ENCODE measurements at regions of chr4 and their contacts with region 1.

Region 1: DNA sequence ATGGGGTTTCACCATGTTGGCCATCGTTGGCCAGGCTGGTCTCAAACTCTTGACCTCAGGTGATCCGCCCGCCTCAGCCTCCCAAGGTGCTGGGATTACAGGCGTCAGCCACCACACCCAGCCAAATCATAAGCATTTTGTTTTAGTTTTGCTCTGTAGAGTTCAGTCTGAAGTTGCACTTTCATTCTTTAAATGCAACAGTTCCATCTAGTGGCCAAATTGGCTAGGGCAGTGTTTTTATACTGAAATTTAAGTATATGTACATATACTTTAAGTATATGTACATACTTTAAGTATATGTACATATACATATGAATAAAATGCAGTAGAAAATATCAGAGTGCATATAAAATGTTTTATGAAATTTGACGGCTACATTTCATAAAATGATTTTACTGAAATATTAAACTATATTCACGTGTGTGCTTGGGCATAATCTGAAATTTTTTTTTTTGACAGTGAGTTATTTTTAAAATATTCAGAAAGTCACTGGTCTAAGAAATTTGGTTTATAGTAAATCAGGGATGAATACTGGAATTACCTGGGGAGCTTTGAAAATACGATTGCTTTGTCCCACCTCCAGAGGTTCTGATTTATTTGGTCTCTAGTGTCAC is 145.5 kb downstream of the NWD2 start:
- DNase-seq: peak; percentile 32
- ATAC-seq: no peak; the same call in 1 of the 2 replicates
- H3K4me3 ChIP-seq: peak overlapping the region in 1 of 2 experiments; percentile 18; a peak in 1 of 4 replicates
- H3K27ac ChIP-seq: no peak overlapping the region
- H3K4me1 ChIP-seq: no peaks in the 10 kb centered on the region
- H3K27me3 ChIP-seq: no peaks in the 10 kb centered on the region
- CTCF ChIP-seq: peak; percentile 70

Region 2: DNA sequence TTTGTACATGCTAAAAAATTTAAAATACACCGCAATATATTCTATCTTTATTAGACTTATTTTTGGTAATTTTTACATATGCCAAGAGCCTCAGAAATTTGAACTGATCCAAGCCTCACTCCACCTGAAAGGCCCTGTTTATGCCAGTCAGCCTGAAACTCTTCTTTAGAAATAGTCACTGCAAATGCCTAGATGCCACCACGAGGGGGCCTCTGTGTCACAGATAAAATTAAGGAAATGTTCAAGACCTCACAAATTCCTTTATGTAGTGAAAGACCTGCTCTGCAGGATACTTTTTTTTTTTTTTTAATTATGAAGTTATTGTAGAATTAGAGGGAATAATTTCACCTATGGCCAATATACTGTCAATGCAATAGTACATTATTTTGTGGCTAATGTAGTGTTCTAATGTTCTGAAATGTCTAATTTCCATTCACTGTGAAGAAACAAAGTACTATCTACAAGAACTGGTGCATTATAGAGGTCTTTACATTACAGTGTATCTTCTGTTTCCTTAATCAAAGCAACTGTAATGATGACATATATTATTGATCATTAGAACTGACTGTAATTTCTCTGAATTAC is 1038.9 kb before region 1 on chr4:
- CTCF ChIA-PET with region 1: no interaction called
- POLR2A ChIA-PET with region 1: no interaction called
- in situ Hi-C with region 1: no loop called
- intact Hi-C with region 1: loop called (anchors 5 kb)
- DNase-seq: peak; percentile 13
- ATAC-seq: no peak
- H3K4me3 ChIP-seq: no peak overlapping the region
- H3K27ac ChIP-seq: no peak overlapping the region
- H3K4me1 ChIP-seq: no peaks in the 10 kb centered on the region
- H3K27me3 ChIP-seq: no peaks in the 10 kb centered on the region
- CTCF ChIP-seq: peak; percentile 72

Region 3: DNA sequence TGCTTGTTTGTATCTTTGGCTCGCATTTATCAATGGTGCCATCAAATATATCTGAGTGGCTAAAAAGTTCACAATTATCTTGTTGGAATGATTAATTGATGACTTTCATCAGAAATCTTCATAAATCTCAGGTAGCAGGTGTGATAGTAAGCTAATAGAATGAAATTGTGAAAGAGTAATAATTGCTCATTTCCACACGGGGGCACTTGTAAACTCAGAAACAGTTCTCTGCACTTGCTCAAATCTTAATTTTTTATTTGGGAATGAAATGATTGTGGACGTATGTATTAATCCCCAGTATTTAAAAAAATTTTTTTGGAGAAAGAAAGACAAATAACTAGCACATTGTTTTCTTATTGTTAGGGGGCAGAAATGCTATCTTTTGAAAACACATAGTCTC is 975.8 kb before region 1 on chr4:
- CTCF ChIA-PET with region 1: no interaction called
- POLR2A ChIA-PET with region 1: no interaction called
- in situ Hi-C with region 1: no loop called
- intact Hi-C with region 1: loop called (anchors 10 kb)
- DNase-seq: no peak
- ATAC-seq: no peak
- H3K4me3 ChIP-seq: no peak overlapping the region
- H3K27ac ChIP-seq: no peak overlapping the region
- H3K4me1 ChIP-seq: no peaks in the 10 kb centered on the region
- H3K27me3 ChIP-seq: no peaks in the 10 kb centered on the region; the same call in 1 of the 2 replicates
- CTCF ChIP-seq: peak; percentile 41; the same call in 1 of the 2 replicates

Measured in Panc1 (cell line).